Common myeloid progenitor, CD34-positive (primary cell): ENCODE measurements at regions of chr17 and their contacts with region 1.

Region 1: GRCh38 chr17:42760652-42761581 is at the start of gene RAMP2:
- DNase-seq: peak in 2 of 3 donors; percentile 46 to 54
- H3K4me3 ChIP-seq: peak within 1 kb of the TSS in 5 of 7 experiments; percentile 27 to 62 (median 45)
- H3K27ac ChIP-seq: no peak within 1 kb of the TSS
- H3K4me1 ChIP-seq: peaks cover 0 to 14% (median 11%) of the 10 kb centered on the region in 4 experiments
- H3K27me3 ChIP-seq: peaks cover 2 to 44% (median 20%) of the 10 kb centered on the region in 5 experiments

Region 2: GRCh38 chr17:42577532-42578281 is 183.2 kb before region 1 on chr17 and contains the start of gene PSMC3IP:
- CTCF ChIA-PET with region 1: interaction called, 23 read pairs
- POLR2A ChIA-PET with region 1: no interaction called
- DNase-seq: peak; percentile 95 to 96 (median 95)
- H3K4me3 ChIP-seq: peak within 1 kb of the TSS; percentile 32 to 91 (median 77)
- H3K27ac ChIP-seq: peak within 1 kb of the TSS; percentile 89 to 94
- H3K4me1 ChIP-seq: peaks cover 2 to 32% (median 23%) of the 10 kb centered on the region in 4 experiments
- H3K27me3 ChIP-seq: no peaks in the 10 kb centered on the region

Region 3: DNA sequence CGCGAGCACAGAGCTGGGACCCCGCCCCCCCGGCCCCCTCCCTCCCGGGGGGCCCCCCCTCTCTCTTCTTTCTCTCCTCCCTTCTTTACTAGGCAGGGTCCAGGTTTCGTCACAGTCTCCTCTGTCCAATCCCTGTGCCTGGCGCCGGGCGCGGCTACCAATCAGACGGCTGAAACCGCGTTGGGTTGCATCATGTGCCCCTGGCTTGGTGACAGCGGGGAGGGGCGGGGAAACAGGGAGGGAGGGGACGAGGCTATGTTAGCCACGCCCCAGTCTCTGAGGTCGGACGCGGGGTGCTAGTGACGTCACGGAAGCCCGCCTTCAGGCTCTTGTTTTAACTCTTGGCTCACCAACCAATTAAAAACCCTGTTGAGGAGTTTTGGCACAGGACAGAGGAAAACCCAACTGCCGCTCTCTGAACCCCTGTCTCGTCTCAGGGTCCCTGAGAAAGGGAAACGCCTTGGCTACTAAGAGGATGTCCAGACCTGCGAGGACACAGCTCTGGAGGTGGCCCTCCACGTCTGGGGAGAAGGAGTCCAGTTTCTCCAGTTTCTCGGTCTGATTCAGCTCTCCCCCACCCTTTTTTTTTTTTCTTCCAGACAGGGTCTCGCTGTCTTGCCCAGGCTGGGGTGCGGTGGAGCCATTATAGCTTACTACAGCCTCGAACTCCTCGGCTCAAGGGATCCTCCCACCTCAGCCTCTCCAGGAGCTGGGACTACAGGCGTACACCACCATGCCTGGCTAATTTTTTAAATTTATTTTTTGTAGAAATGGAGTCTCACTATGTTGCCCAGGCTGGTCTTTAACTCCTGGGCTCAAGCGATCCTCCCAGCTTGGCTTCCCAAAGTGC is 83.7 kb before region 1 on chr17:
- CTCF ChIA-PET with region 1: no interaction called
- POLR2A ChIA-PET with region 1: no interaction called
- DNase-seq: peak; percentile 99
- H3K4me3 ChIP-seq: peak overlapping the region in 5 of 7 experiments; percentile 60 to 85 (median 78)
- H3K27ac ChIP-seq: peak overlapping the region in 1 of 2 experiments; percentile 79
- H3K4me1 ChIP-seq: peaks cover 6 to 84% (median 74%) of the 10 kb centered on the region in 4 experiments
- H3K27me3 ChIP-seq: peaks cover 5 to 59% (median 30%) of the 10 kb centered on the region in 5 experiments

Region 4: GRCh38 chr17:42720996-42721583 is 39.8 kb before region 1 on chr17:
- CTCF ChIA-PET with region 1: interaction called, 11 read pairs
- POLR2A ChIA-PET with region 1: no interaction called
- DNase-seq: peak; percentile 74 to 87 (median 81)
- H3K4me3 ChIP-seq: no peak overlapping the region
- H3K27ac ChIP-seq: no peak overlapping the region
- H3K4me1 ChIP-seq: no peaks in the 10 kb centered on the region
- H3K27me3 ChIP-seq: no peaks in the 10 kb centered on the region

Region 5: DNA sequence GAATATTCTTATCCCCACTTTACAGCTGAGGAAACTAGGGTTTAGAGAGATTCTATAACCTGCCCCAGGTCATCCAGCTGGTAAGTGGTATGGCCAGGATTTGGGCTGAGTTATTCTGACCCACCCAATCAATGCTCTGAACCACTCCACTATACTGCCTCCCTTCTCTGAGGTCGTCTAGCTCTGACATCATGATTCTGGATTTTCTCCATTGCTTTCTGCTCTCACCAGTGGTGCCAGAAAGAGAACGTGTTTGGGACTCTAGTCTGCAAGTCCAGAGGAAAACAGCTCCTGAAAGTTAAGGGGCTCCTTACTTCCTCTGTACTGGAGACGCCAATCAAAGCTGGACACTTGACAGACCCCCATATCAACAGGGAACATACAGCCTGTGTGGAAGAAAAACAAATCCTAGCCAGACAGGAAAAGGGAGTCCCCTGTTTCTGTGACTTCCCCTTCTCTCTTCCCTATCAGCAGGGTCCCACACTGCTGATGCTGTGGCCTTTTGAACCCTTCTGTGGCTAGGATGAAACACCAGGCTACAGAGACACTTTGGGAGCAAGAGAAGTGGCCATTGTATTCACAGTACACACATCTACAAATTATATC is 10.1 kb before region 1 on chr17:
- CTCF ChIA-PET with region 1: interaction called, 10 read pairs
- POLR2A ChIA-PET with region 1: interaction called, 3 read pairs
- DNase-seq: peak; percentile 34 to 68 (median 51)
- H3K4me3 ChIP-seq: peak overlapping the region in 1 of 7 experiments; percentile 17
- H3K27ac ChIP-seq: no peak overlapping the region
- H3K4me1 ChIP-seq: peaks cover 3 to 14% (median 8%) of the 10 kb centered on the region in 4 experiments
- H3K27me3 ChIP-seq: peaks cover 0 to 3% (median 0%) of the 10 kb centered on the region in 5 experiments

Region 6: DNA sequence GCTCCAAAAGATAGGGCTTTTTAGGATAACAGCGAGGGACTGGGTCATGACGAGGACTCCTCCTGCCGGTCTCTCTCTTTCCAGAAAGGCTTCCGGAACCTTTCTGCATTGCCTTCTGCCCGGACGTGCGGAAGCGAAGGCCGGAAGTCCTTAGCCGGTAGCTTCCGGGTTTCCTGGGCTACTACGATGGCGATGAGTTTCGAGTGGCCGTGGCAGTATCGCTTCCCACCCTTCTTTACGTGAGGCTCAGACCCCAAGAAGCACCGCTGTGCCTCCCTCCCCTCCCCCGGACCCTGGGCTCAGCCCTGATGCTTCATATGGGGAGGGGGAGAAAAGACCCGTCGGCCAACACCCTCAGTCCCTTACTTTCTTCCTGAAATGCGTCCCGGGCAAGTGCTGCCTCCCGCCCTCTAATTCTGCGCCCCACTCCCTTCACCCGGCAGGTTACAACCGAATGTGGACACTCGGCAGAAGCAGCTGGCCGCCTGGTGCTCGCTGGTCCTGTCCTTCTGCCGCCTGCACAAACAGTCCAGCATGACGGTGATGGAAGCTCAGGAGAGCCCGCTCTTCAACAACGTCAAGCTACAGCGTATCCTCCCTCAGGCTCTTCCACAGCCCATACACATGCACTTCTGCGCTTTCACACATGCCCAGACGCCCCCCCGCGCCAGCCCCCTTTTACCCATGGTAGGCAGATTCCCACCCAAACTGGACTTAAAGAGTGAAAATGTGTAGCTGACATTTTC is 12.5 kb after region 1 on chr17 and contains the start of gene VPS25:
- CTCF ChIA-PET with region 1: interaction called, 10 read pairs
- POLR2A ChIA-PET with region 1: no interaction called
- DNase-seq: peak; percentile 43 to 58 (median 51)
- H3K4me3 ChIP-seq: peak within 1 kb of the TSS; percentile 79 to 99 (median 91)
- H3K27ac ChIP-seq: peak within 1 kb of the TSS in 1 of 2 experiments; percentile 80
- H3K4me1 ChIP-seq: peaks cover 0 to 15% (median 14%) of the 10 kb centered on the region in 4 experiments
- H3K27me3 ChIP-seq: no peaks in the 10 kb centered on the region

Region 7: DNA sequence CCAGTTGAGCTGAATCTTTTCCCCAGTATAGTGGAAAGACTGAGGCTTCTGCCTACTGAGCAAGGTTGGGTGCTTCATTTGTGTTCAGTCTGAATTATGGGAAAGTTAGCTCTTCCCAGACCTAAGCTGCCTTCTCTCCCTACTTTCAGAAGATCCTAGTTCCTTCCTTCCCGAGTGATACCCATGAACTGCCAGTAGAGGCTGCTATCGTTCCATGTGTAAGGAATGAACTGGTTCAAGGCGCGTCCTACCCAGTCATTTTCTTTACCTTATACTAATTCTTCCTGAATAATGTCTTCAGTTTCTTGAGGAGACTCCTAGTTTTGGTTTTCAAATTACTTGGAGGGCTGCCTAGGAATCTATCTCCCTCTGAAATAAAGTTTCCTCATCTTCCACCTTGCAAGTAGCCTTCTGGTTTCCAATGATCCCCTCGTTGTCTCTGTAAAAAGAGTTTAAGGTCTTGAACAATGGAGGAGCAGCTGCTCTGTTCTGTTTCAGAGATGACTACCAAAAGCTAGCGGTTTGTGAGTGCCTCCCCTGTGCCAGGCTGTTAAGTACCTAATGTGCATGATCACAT is 82.5 kb after region 1 on chr17:
- CTCF ChIA-PET with region 1: no interaction called
- POLR2A ChIA-PET with region 1: no interaction called
- DNase-seq: peak; percentile 63 to 76 (median 71)
- H3K4me3 ChIP-seq: no peak overlapping the region
- H3K27ac ChIP-seq: no peak overlapping the region
- H3K4me1 ChIP-seq: peaks cover 0 to 5% (median 0%) of the 10 kb centered on the region in 4 experiments
- H3K27me3 ChIP-seq: no peaks in the 10 kb centered on the region